Vagina (tissue), 2 donors: ENCODE measurements at regions of chr3 and their contacts with region 1.

Region 1: DNA sequence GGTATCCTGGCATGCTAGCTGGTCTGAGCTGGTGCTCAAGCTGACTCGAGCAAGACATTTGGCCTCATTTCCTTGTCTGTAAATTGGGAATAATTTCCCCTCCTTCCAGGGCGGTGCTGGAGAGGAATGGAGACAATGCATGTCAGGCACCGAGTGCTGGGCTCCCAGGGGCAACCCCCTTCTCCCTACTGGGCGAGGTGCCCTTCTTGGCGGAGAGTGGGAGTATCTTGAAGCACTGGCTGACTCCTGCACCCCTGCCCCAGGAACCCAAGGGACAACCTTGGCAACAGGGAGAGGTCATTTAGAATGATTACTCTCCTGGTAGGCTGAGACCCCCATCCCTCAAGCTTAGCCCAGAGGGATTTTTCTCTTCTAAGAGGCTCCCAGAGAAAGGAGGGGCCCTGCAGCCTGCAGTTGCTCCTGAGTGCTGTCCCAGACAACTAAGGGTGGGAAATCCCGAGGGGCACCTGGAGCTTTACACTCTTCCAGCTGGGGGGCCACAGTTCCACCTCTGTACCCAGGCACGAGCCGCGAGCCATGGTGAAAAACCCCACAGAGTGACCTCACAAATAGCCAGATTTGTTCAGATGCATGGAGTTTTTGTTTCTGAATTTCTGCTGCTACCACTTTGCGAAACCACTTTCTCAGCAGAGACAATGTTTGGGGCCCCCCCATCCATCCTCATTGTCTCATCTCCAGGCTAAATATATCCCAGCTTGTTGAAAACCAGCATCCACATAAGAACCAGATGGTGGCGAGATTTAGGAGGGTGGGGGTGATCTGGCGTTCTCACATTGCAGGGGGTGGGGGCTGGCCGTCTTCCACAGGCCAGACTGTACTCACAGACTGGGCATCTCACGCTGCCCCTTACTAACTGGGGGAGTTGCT is 44.8 kb downstream of the ABTB1 start:
- DNase-seq: no peak
- H3K4me3 ChIP-seq: no peak overlapping the region
- H3K27ac ChIP-seq: no peak overlapping the region
- H3K4me1 ChIP-seq: peaks cover under 1% of the 10 kb centered on the region
- H3K27me3 ChIP-seq: no peaks in the 10 kb centered on the region
- CTCF ChIP-seq: no peak
- POLR2A ChIP-seq: no peak

Region 2: GRCh38 chr3:126714921-126715320 is 1002.7 kb before region 1 on chr3:
- intact Hi-C with region 1: loop called (anchors 5 kb)
- DNase-seq: no peak
- H3K4me3 ChIP-seq: no peak overlapping the region
- H3K27ac ChIP-seq: no peak overlapping the region
- H3K4me1 ChIP-seq: no peaks in the 10 kb centered on the region
- H3K27me3 ChIP-seq: no peaks in the 10 kb centered on the region
- CTCF ChIP-seq: no peak
- POLR2A ChIP-seq: no peak

Region 3: GRCh38 chr3:127857333-127857732 is 139.7 kb after region 1 on chr3:
- intact Hi-C with region 1: no loop called
- DNase-seq: no peak
- H3K4me3 ChIP-seq: no peak overlapping the region
- H3K27ac ChIP-seq: no peak overlapping the region
- H3K4me1 ChIP-seq: no peaks in the 10 kb centered on the region
- H3K27me3 ChIP-seq: no peaks in the 10 kb centered on the region
- CTCF ChIP-seq: no peak
- POLR2A ChIP-seq: no peak

Region 4: GRCh38 chr3:127997961-127998360 is 280.4 kb after region 1 on chr3:
- intact Hi-C with region 1: no loop called
- DNase-seq: no peak
- H3K4me3 ChIP-seq: no peak overlapping the region
- H3K27ac ChIP-seq: no peak overlapping the region
- H3K4me1 ChIP-seq: no peaks in the 10 kb centered on the region
- H3K27me3 ChIP-seq: no peaks in the 10 kb centered on the region
- CTCF ChIP-seq: no peak
- POLR2A ChIP-seq: no peak